ENCODE measurements at regions of chr15 and their contacts with region 1.

Region 1: DNA sequence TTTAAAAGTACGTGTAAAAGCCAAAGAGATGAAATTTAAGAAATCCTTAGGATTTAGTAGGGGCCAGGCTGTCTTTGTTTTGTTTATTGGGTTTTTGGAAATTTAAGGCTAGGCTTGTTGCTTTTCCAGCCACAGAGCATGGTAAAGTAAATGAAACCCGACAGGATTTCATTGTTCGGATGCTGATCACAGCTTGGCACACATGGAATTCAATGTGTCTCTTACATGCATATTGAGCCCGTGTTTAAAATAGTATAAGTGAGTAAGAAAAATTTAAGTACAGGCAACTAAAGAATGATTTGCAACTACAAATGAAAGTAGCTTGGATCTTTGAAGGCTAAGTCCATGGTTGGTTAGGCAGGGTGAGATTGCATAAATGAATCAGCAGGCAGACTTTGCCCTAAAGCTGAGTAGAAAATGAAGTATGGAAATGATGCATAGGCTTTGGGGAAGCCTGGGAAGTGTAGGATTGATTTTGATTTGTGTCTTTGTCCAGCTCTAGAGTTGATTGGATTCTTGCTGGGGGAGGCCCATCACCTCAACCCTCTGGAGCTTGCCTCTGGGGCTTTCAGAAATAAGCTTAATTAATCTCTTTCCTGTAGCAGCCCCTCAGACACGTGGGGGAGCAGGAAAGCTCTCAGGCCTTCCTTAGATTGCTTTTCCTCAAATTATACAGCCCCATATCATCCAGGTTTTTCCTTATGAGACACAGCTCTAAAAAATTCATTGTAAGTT is 68.2 kb upstream of the ADAMTSL3 start:
- DNase-seq: no peak
- H3K4me3 ChIP-seq: no peak overlapping the region
- H3K27ac ChIP-seq: no peak overlapping the region
- H3K4me1 ChIP-seq: peaks cover 21% of the 10 kb centered on the region
- H3K27me3 ChIP-seq: no peaks in the 10 kb centered on the region
- CTCF ChIP-seq: no peak

Region 2: GRCh38 chr15:83626171-83626802 is 40.5 kb after region 1 on chr15:
- CTCF ChIA-PET with region 1: no interaction called
- dilution Hi-C with region 1: loop called (anchors 5 kb)
- in situ Hi-C with region 1: no loop called
- intact Hi-C with region 1: no loop called
- DNase-seq: peak; percentile 67
- H3K4me3 ChIP-seq: no peak overlapping the region
- H3K27ac ChIP-seq: no peak overlapping the region
- H3K4me1 ChIP-seq: no peaks in the 10 kb centered on the region
- H3K27me3 ChIP-seq: no peaks in the 10 kb centered on the region
- CTCF ChIP-seq: no peak

Measured in mammary epithelial cell (primary cell).